Esophagus muscularis mucosa (tissue), 4 donors: ENCODE measurements at regions of chr5 and their contacts with region 1.

Region 1: GRCh38 chr5:178204182-178204894 is at the start of gene HNRNPAB:
- DNase-seq: peak; percentile 99
- H3K4me3 ChIP-seq: peak within 1 kb of the TSS; percentile 90 to 99 (median 98)
- H3K27ac ChIP-seq: peak within 1 kb of the TSS; percentile 91 to 98 (median 98)
- H3K4me1 ChIP-seq: peaks cover 26 to 43% (median 29%) of the 10 kb centered on the region in 4 donors
- H3K27me3 ChIP-seq: no peaks in the 10 kb centered on the region
- CTCF ChIP-seq: no peak
- EP300 ChIP-seq: no peak
- POLR2A ChIP-seq: peak; percentile 94
- total RNA-seq, gene HNRNPAB: 98.4 to 135 (median 104) TPM

Region 2: GRCh38 chr5:178153573-178154343 is 50.6 kb before region 1 on chr5 and contains the start of gene NHP2:
- intact Hi-C with region 1: loop called (anchors 5 kb)
- DNase-seq: peak; percentile 100
- H3K4me3 ChIP-seq: peak within 1 kb of the TSS; percentile 59 to 75 (median 66)
- H3K27ac ChIP-seq: peak within 1 kb of the TSS; percentile 72 to 86 (median 79)
- H3K4me1 ChIP-seq: peaks cover 16 to 35% (median 30%) of the 10 kb centered on the region in 4 donors
- H3K27me3 ChIP-seq: no peaks in the 10 kb centered on the region
- CTCF ChIP-seq: peak in 1 of 3 experiments; percentile 13
- EP300 ChIP-seq: no peak
- POLR2A ChIP-seq: no peak
- total RNA-seq, gene NHP2: 109 to 215 (median 162) TPM

Region 3: GRCh38 chr5:178232124-178232919 is 28.0 kb after region 1 on chr5 and contains the start of gene PHYKPL:
- intact Hi-C with region 1: loop called (anchors 2 kb)
- DNase-seq: no peak
- H3K4me3 ChIP-seq: peak within 1 kb of the TSS; percentile 89 to 95 (median 92)
- H3K27ac ChIP-seq: peak within 1 kb of the TSS; percentile 94 to 99 (median 97)
- H3K4me1 ChIP-seq: peaks cover 31 to 54% (median 41%) of the 10 kb centered on the region in 4 donors
- H3K27me3 ChIP-seq: no peaks in the 10 kb centered on the region
- CTCF ChIP-seq: peak in 2 of 3 experiments; percentile 1 to 10
- EP300 ChIP-seq: no peak
- POLR2A ChIP-seq: peak; percentile 26
- total RNA-seq, gene PHYKPL: 27.4 to 45.1 (median 37.5) TPM